Caco-2 (cell line): ENCODE measurements at regions of chr5 and their contacts with region 1.

Region 1: GRCh38 chr5:160342403-160342941 is 28.0 kb downstream of the C1QTNF2 start:
- DNase-seq: no peak
- H3K4me3 ChIP-seq: no peak overlapping the region
- H3K4me3 Mint-ChIP-seq: no peak overlapping the region
- H3K27ac Mint-ChIP-seq: no peak overlapping the region
- H3K4me1 ChIP-seq: peaks cover 5% of the 10 kb centered on the region; the same call in 1 of the 2 replicates
- H3K4me1 Mint-ChIP-seq: no peaks in the 10 kb centered on the region
- H3K27me3 ChIP-seq: no peaks in the 10 kb centered on the region
- H3K27me3 Mint-ChIP-seq: no peaks in the 10 kb centered on the region
- CTCF ChIP-seq: no peak

Region 2: DNA sequence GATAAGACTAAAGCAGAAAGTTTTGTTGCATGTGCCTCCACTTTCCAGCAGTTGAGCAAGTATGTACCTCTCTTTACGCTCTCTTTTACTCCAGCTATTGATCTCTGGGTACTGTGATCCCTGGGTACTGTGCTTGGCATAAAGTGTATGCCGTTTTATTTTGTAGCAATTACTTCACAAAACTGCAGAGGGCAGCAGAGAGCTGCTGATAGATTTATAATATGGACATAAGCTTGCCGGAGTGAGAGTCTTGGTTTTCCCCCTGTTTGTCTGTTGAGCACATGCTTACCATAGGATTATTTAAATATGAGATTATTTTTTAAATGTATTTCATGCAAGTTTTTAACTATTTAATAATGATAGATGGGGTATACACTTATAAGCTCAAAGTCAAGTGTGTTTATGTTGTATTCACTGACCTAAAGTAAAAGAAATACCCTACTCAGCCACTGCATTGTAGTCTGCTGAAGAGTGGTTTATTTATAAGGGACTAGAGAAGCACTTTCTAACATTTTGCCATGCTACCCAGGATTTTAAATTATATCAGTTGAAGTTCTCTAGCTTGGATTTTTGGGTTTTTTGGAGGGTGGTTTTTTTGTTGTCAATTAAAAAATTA is 320.5 kb before region 1 on chr5:
- CTCF ChIA-PET with region 1: interaction called, 11 read pairs
- POLR2A ChIA-PET with region 1: interaction called, 4 read pairs
- intact Hi-C with region 1: loop called (anchors 1 kb)
- DNase-seq: peak; percentile 56 to 71
- H3K4me3 ChIP-seq: no peak overlapping the region
- H3K4me3 Mint-ChIP-seq: no peak overlapping the region
- H3K27ac Mint-ChIP-seq: no peak overlapping the region
- H3K4me1 ChIP-seq: no peaks in the 10 kb centered on the region
- H3K4me1 Mint-ChIP-seq: peaks cover 7% of the 10 kb centered on the region
- H3K27me3 ChIP-seq: no peaks in the 10 kb centered on the region
- H3K27me3 Mint-ChIP-seq: no peaks in the 10 kb centered on the region
- CTCF ChIP-seq: peak; percentile 77 to 85

Region 3: DNA sequence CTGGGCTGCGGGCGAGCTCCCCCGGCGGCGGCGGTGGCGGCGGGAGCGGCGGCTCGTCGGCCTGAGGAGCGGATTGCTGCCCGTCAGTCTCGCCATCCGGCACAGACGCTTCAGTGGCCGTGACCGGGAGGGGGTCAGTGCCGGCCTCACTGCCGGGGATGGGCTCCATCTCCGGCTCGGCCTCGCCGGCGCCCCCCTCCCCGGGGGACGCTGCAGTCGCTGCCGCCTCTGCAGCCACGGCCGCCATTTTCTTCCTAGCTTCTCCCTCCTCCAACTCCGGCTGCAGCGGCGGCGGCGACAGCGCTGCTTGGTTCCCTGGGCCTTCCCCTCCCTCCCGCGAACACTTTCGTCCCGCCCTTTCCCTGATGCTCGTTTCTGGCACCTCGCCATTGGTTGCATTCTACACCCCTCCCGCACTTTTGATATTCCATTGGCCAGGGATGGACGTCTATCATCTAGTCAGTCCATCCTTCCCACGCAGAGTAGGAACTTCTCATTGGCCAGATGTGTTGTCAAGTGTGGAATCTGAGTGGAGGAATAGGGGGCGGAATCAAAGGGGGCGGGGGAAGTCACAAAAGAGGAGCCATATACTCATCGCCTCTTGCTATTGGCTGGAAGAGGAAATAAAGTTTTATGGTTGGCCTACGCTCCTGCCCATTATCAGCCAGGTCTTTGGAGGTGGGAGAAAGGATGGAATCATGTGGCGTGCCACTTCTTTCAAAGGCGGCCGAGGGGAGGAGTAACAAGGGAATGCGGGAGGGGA is 223.1 kb before region 1 on chr5 and contains the start of gene PWWP2A:
- CTCF ChIA-PET with region 1: interaction called, 3 read pairs
- POLR2A ChIA-PET with region 1: no interaction called
- intact Hi-C with region 1: loop called (anchors 1 kb)
- DNase-seq: peak; percentile 98 to 99
- H3K4me3 ChIP-seq: peak within 1 kb of the TSS; percentile 91
- H3K4me3 Mint-ChIP-seq: peak within 1 kb of the TSS; percentile 93
- H3K27ac Mint-ChIP-seq: peak within 1 kb of the TSS; percentile 93
- H3K4me1 ChIP-seq: peaks cover 7% of the 10 kb centered on the region; the same call in 1 of the 2 replicates
- H3K4me1 Mint-ChIP-seq: peaks cover 10% of the 10 kb centered on the region
- H3K27me3 ChIP-seq: no peaks in the 10 kb centered on the region
- H3K27me3 Mint-ChIP-seq: no peaks in the 10 kb centered on the region
- CTCF ChIP-seq: peak in 1 of 2 experiments; percentile 9
- total RNA-seq, gene PWWP2A: 34.4 and 36.7 TPM in 2 replicates

Region 4: DNA sequence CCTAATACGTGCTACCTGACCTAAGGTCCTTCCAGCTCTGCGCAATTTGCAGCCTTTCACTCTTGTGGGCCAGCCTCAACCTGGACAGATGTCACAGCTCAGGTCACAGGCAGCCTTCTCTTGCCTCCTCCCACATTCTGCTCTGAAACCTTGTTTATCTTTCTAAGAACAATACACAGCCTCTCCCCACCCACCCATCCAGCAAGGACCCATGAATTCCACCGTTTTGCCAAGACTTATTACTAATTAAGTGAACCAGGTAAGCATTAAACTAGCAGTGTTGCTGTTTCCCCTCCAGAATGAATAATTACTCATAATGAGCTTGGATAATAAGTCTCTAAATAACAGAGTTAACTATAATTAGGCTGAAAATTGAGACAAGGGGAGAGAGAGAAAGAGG is 102.1 kb before region 1 on chr5:
- CTCF ChIA-PET with region 1: interaction called, 19 read pairs
- POLR2A ChIA-PET with region 1: no interaction called
- intact Hi-C with region 1: loop called (anchors 1 kb)
- DNase-seq: no peak
- H3K4me3 ChIP-seq: no peak overlapping the region
- H3K4me3 Mint-ChIP-seq: no peak overlapping the region
- H3K27ac Mint-ChIP-seq: no peak overlapping the region
- H3K4me1 ChIP-seq: peaks cover 22% of the 10 kb centered on the region; the same call in 1 of the 2 replicates
- H3K4me1 Mint-ChIP-seq: peaks cover 14% of the 10 kb centered on the region
- H3K27me3 ChIP-seq: no peaks in the 10 kb centered on the region
- H3K27me3 Mint-ChIP-seq: no peaks in the 10 kb centered on the region
- CTCF ChIP-seq: no peak

Region 5: GRCh38 chr5:160260881-160261815 is 81.3 kb before region 1 on chr5:
- CTCF ChIA-PET with region 1: interaction called, 6 read pairs
- POLR2A ChIA-PET with region 1: no interaction called
- intact Hi-C with region 1: loop called (anchors 1 kb)
- DNase-seq: peak; percentile 88 to 97
- H3K4me3 ChIP-seq: peak overlapping the region; percentile 0; the same call in 1 of the 2 replicates
- H3K4me3 Mint-ChIP-seq: peak overlapping the region; percentile 73
- H3K27ac Mint-ChIP-seq: peak overlapping the region; percentile 100
- H3K4me1 ChIP-seq: peaks cover 45% of the 10 kb centered on the region
- H3K4me1 Mint-ChIP-seq: peaks cover 57% of the 10 kb centered on the region
- H3K27me3 ChIP-seq: no peaks in the 10 kb centered on the region
- H3K27me3 Mint-ChIP-seq: no peaks in the 10 kb centered on the region
- CTCF ChIP-seq: no peak

Region 6: GRCh38 chr5:160312134-160312959 is 30.1 kb before region 1 on chr5 and contains the start of gene CCNJL:
- CTCF ChIA-PET with region 1: interaction called, 3 read pairs
- POLR2A ChIA-PET with region 1: no interaction called
- intact Hi-C with region 1: loop called (anchors 1 kb)
- DNase-seq: peak; percentile 79 to 86
- H3K4me3 ChIP-seq: peak within 1 kb of the TSS; percentile 63
- H3K4me3 Mint-ChIP-seq: peak within 1 kb of the TSS; percentile 92
- H3K27ac Mint-ChIP-seq: peak within 1 kb of the TSS; percentile 92
- H3K4me1 ChIP-seq: peaks cover 34% of the 10 kb centered on the region
- H3K4me1 Mint-ChIP-seq: peaks cover 50% of the 10 kb centered on the region
- H3K27me3 ChIP-seq: no peaks in the 10 kb centered on the region
- H3K27me3 Mint-ChIP-seq: no peaks in the 10 kb centered on the region
- CTCF ChIP-seq: no peak
- total RNA-seq, gene CCNJL: 16.5 and 17.4 TPM in 2 replicates